Activated B cell treated with CpG ODN at 0.5 μM for 24 hours (primary cell): ENCODE measurements at regions of chr3 and their contacts with region 1.

Region 1: GRCh38 chr3:167228135-167228534 is 152.0 kb downstream of the ZBBX start:
- DNase-seq: no peak
- ATAC-seq: no peak
- H3K4me3 Mint-ChIP-seq: no peak overlapping the region
- H3K27ac Mint-ChIP-seq: no peak overlapping the region
- H3K4me1 Mint-ChIP-seq: no peaks in the 10 kb centered on the region
- H3K27me3 Mint-ChIP-seq: no peaks in the 10 kb centered on the region
- CTCF ChIP-seq: no peak

Region 2: DNA sequence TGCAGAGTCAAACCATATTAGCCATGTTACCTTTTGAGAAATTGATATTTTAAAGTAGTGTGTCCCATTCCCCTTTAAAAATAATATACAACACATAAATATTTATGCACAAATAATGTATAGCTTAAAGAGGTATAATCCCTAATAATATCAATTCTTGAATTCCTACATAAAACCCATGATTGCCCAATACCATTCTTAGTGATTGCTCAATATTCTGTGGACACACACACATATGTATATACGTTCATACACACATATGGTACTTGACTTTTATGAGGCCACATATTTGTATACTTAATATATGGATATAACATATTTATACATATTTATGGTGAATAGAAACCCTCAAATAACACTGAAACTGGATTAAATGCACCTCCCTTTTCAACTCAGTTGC is 215.4 kb before region 1 on chr3:
- CTCF ChIA-PET with region 1: no interaction called
- POLR2A ChIA-PET with region 1: no interaction called
- intact Hi-C with region 1: loop called (anchors 10 kb)
- DNase-seq: no peak
- ATAC-seq: no peak
- H3K4me3 Mint-ChIP-seq: no peak overlapping the region
- H3K27ac Mint-ChIP-seq: no peak overlapping the region
- H3K4me1 Mint-ChIP-seq: no peaks in the 10 kb centered on the region
- H3K27me3 Mint-ChIP-seq: no peaks in the 10 kb centered on the region
- CTCF ChIP-seq: no peak

Region 3: DNA sequence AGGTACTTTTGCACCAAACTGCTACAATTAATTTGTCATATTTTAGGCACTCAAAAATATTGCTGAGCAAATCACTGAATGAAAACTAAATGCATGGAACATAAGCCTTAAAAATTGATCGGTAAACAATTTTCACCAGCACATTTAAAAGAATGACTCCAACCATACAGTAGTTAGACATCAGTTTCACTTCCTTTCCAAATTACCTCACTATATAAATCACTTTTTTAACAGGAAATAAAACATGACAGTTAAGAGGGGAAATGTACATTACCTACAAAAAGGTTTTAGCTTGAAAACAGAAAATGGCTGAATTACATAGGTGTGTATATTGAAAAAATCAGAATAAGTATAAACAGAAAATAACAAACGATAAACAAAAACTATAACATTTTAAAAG is 615.8 kb after region 1 on chr3:
- CTCF ChIA-PET with region 1: no interaction called
- POLR2A ChIA-PET with region 1: no interaction called
- intact Hi-C with region 1: no loop called
- DNase-seq: no peak
- ATAC-seq: peak; percentile 79
- H3K4me3 Mint-ChIP-seq: peak overlapping the region; percentile 38
- H3K27ac Mint-ChIP-seq: peak overlapping the region; percentile 46
- H3K4me1 Mint-ChIP-seq: peaks cover 34% of the 10 kb centered on the region
- H3K27me3 Mint-ChIP-seq: no peaks in the 10 kb centered on the region
- CTCF ChIP-seq: no peak